MCF 10A (cell line): ENCODE measurements at regions of chr19 and their contacts with region 1.

Region 1: GRCh38 chr19:47729992-47730889 is 15.1 kb upstream of the NOP53 start:
- DNase-seq: peak; percentile 76
- H3K4me3 Mint-ChIP-seq: peak overlapping the region; percentile 76
- H3K27ac Mint-ChIP-seq: peak overlapping the region; percentile 83
- H3K4me1 Mint-ChIP-seq: peaks cover 43% of the 10 kb centered on the region
- H3K27me3 Mint-ChIP-seq: no peaks in the 10 kb centered on the region
- CTCF ChIP-seq: no peak

Region 2: DNA sequence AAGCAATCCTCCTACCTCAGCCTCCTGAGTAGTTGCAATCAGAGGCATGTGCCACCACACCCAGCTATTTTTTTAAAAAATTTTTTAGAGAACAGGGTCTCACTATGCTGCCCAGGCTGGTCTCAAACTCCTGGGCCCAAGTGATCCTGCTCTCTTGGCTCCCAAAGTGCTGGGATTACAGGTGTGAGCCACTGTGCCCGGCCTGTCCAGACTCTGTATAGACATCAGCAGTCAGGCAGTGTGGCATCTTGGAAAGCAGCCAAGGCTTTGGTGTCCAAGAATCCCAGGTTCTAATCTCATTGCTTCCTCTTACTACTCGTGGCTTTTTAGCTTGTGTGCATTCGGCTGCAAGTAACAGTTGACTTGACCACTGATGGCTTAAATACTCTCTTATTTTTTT is 78.0 kb before region 1 on chr19:
- CTCF ChIA-PET with region 1: no interaction called
- POLR2A ChIA-PET with region 1: no interaction called
- intact Hi-C with region 1: no loop called
- DNase-seq: no peak
- H3K4me3 Mint-ChIP-seq: no peak overlapping the region
- H3K27ac Mint-ChIP-seq: no peak overlapping the region
- H3K4me1 Mint-ChIP-seq: peaks cover 14% of the 10 kb centered on the region
- H3K27me3 Mint-ChIP-seq: no peaks in the 10 kb centered on the region
- CTCF ChIP-seq: no peak

Region 3: GRCh38 chr19:47713046-47714021 is 16.9 kb before region 1 on chr19 and contains the start of gene EHD2:
- CTCF ChIA-PET with region 1: interaction called, 32 read pairs
- POLR2A ChIA-PET with region 1: interaction called, 60 read pairs
- intact Hi-C with region 1: no loop called
- DNase-seq: peak; percentile 81
- H3K4me3 Mint-ChIP-seq: peak within 1 kb of the TSS; percentile 90
- H3K27ac Mint-ChIP-seq: peak within 1 kb of the TSS; percentile 62
- H3K4me1 Mint-ChIP-seq: peaks cover 24% of the 10 kb centered on the region
- H3K27me3 Mint-ChIP-seq: no peaks in the 10 kb centered on the region
- CTCF ChIP-seq: peak; percentile 97
- total RNA-seq, gene EHD2: 88.8 and 104 TPM in 2 replicates

Region 4: GRCh38 chr19:47719047-47719859 is 11.0 kb before region 1 on chr19:
- CTCF ChIA-PET with region 1: interaction called, 32 read pairs
- POLR2A ChIA-PET with region 1: interaction called, 60 read pairs
- intact Hi-C with region 1: loop called (anchors 1 kb)
- DNase-seq: peak; percentile 89
- H3K4me3 Mint-ChIP-seq: peak overlapping the region; percentile 63
- H3K27ac Mint-ChIP-seq: peak overlapping the region; percentile 77
- H3K4me1 Mint-ChIP-seq: peaks cover 50% of the 10 kb centered on the region
- H3K27me3 Mint-ChIP-seq: no peaks in the 10 kb centered on the region
- CTCF ChIP-seq: no peak